ENCODE measurements at regions of chr20 and their contacts with region 1.

Region 1: GRCh38 chr20:53869466-53870258 is 200.7 kb downstream of the BCAS1 start:
- DNase-seq: peak in 8 of 9 donors; percentile 66 to 82 (median 76)
- ATAC-seq: peak; percentile 90
- H3K4me3 ChIP-seq: no peak overlapping the region
- H3K4me3 Mint-ChIP-seq: peak overlapping the region; percentile 11 to 85 (median 58)
- H3K27ac ChIP-seq: peak overlapping the region; percentile 60
- H3K27ac Mint-ChIP-seq: peak overlapping the region; percentile 79 to 97 (median 94)
- H3K4me1 ChIP-seq: peaks cover 64 to 73% of the 10 kb centered on the region in 2 donors
- H3K4me1 Mint-ChIP-seq: peaks cover 55 to 85% (median 73%) of the 10 kb centered on the region in 7 donors
- H3K27me3 ChIP-seq: no peaks in the 10 kb centered on the region
- H3K27me3 Mint-ChIP-seq: no peaks in the 10 kb centered on the region

Region 2: GRCh38 chr20:53330601-53331140 is 539.0 kb before region 1 on chr20:
- CTCF ChIA-PET with region 1: no interaction called
- POLR2A ChIA-PET with region 1: no interaction called
- intact Hi-C with region 1: no loop called
- DNase-seq: no peak
- ATAC-seq: no peak
- H3K4me3 ChIP-seq: no peak overlapping the region
- H3K4me3 Mint-ChIP-seq: no peak overlapping the region
- H3K27ac ChIP-seq: no peak overlapping the region
- H3K27ac Mint-ChIP-seq: peak overlapping the region in 1 of 9 donors; percentile 34
- H3K4me1 ChIP-seq: no peaks in the 10 kb centered on the region
- H3K4me1 Mint-ChIP-seq: peaks cover 0 to 26% (median 5%) of the 10 kb centered on the region in 7 donors
- H3K27me3 ChIP-seq: no peaks in the 10 kb centered on the region
- H3K27me3 Mint-ChIP-seq: no peaks in the 10 kb centered on the region

Region 3: DNA sequence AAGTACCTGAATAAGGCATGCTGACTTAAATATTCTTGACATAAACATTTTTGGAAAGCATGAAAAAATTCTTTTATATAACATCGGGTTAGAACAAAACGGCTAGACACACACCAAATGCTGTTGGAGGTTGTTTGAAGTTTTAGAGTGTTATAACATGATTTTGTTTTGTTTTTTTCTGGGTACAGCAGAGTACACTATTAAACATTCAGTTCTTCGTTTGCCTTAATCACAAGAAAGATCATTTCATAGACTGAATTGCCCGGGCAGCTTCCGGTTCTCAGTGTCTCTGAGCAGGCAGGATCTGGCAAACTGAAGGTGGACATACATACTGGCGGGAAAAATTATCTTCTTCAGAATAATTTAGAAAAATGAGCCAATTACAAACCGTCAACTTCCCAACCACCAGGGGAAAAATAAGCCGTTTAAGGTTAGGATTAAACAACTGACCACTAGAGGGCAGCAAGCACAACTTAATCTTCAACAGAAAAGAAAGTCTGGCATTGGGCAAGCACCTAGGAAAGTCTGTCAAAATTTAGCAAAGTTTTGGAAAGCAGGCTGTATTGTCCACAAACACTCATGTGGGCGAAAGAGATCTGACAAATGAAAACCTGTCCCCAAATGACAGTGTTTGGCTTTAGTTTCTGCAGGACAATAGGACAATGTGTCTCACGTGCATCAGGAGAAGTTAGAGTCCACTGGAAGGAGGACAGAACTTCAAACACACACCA is 291.0 kb before region 1 on chr20:
- CTCF ChIA-PET with region 1: interaction called, 10 read pairs
- POLR2A ChIA-PET with region 1: interaction called, 7 read pairs
- intact Hi-C with region 1: loop called (anchors 1 kb)
- DNase-seq: peak in 8 of 9 donors; percentile 44 to 85 (median 80)
- ATAC-seq: peak; percentile 85
- H3K4me3 ChIP-seq: peak overlapping the region; percentile 49
- H3K4me3 Mint-ChIP-seq: peak overlapping the region; percentile 79 to 98 (median 86)
- H3K27ac ChIP-seq: peak overlapping the region; percentile 70
- H3K27ac Mint-ChIP-seq: peak overlapping the region; percentile 83 to 98 (median 94)
- H3K4me1 ChIP-seq: peaks cover 53 to 60% of the 10 kb centered on the region in 2 donors
- H3K4me1 Mint-ChIP-seq: peaks cover 41 to 99% (median 91%) of the 10 kb centered on the region in 7 donors
- H3K27me3 ChIP-seq: no peaks in the 10 kb centered on the region
- H3K27me3 Mint-ChIP-seq: no peaks in the 10 kb centered on the region

Region 4: DNA sequence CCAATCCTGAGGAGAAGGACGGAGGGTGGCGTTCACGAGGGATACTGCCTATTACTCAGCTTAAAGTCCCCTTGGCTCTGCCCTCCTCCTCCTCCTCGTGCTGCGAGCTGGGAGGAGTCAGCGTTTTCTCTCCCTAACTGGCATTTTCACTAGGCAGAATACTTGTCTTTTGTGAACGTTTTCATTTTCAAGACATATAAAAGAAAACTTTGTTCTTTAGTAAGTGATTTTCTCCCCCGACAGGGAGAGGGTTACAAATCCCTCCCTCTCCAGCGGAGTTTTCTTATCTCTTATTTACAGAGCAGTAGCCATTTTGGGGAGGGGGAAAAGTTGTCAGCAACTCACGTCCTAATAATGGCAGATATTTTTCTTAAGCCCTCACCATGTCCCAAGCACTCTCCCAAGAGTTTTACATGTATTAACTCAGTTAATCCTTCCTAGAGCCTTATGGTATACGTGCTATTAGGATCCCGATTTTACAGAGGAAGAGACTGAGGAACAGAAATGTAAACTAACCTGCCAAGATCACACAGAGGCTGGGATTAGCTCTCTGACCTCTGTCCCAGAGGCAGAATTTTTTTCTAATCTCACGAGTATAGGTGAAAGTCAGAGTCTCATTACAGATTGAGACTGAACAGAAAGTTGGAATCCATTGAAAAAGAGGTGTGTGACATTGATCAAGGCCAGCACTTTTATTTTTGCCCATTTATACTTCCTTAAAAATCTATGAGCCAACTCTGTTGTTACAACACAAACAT is 246.0 kb before region 1 on chr20:
- CTCF ChIA-PET with region 1: no interaction called
- POLR2A ChIA-PET with region 1: interaction called, 8 read pairs
- intact Hi-C with region 1: loop called in 1 of 2 experiments (anchors 1 kb)
- DNase-seq: peak in 4 of 9 donors; percentile 28 to 44 (median 31)
- ATAC-seq: peak; percentile 83
- H3K4me3 ChIP-seq: peak overlapping the region; percentile 56
- H3K4me3 Mint-ChIP-seq: peak overlapping the region; percentile 78 to 92 (median 87)
- H3K27ac ChIP-seq: peak overlapping the region; percentile 74
- H3K27ac Mint-ChIP-seq: peak overlapping the region; percentile 91 to 98 (median 97)
- H3K4me1 ChIP-seq: peaks cover 31 to 32% of the 10 kb centered on the region in 2 donors
- H3K4me1 Mint-ChIP-seq: peaks cover 17 to 53% (median 44%) of the 10 kb centered on the region in 7 donors
- H3K27me3 ChIP-seq: no peaks in the 10 kb centered on the region
- H3K27me3 Mint-ChIP-seq: no peaks in the 10 kb centered on the region

Region 5: DNA sequence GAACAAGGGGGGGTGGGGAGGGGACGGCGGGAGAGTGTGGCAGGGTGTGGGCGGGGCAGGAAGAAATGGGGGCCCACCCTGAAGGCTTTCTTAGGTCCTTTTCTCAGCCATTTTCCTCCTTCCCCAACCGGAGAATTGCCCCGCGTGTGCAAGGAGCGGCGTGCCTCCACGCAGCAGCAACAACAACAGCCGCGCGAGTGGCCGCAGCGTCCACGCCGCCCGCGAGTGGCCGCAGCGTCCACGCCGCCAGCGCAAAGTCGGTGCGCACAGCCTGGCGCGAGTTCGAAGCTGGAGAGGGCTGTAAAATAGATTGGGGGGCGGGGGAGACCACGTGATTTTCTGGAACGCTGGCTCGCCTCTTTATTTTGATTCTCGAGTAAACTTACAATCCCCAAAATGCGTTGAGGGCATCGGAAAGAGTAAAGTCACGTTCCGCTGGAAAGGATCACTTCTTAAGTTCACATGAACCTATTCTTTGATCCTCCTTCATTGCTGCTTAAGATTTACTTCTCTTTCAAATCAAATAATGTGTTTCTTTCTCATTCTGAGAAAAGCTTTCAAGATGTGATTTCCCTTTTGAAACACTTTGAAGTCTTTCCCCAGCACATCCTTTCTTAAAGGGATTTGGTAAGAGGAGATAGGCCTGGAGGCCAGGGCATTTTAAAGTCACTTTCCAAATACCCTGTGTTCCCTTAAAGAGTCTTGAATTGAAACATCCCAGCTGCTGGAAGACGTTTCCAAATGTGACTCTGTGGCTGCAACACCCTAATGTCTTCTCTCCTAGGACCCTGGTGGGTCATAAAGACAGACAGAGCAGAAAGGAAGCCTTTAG is 209.4 kb before region 1 on chr20:
- CTCF ChIA-PET with region 1: interaction called, 3 read pairs
- POLR2A ChIA-PET with region 1: interaction called, 6 read pairs
- intact Hi-C with region 1: loop called in 1 of 2 experiments (anchors 5 kb)
- DNase-seq: peak; percentile 11 to 54 (median 39)
- ATAC-seq: peak; percentile 36
- H3K4me3 ChIP-seq: peak overlapping the region; percentile 71
- H3K4me3 Mint-ChIP-seq: peak overlapping the region; percentile 69 to 92 (median 86)
- H3K27ac ChIP-seq: peak overlapping the region; percentile 74
- H3K27ac Mint-ChIP-seq: peak overlapping the region; percentile 79 to 96 (median 92)
- H3K4me1 ChIP-seq: peaks cover 12 to 32% of the 10 kb centered on the region in 2 donors
- H3K4me1 Mint-ChIP-seq: peaks cover 40 to 79% (median 70%) of the 10 kb centered on the region in 7 donors
- H3K27me3 ChIP-seq: no peaks in the 10 kb centered on the region
- H3K27me3 Mint-ChIP-seq: no peaks in the 10 kb centered on the region

Region 6: GRCh38 chr20:53828682-53829254 is 40.9 kb before region 1 on chr20:
- CTCF ChIA-PET with region 1: no interaction called
- POLR2A ChIA-PET with region 1: interaction called, 8 read pairs
- intact Hi-C with region 1: loop called (anchors 1 to 2 kb)
- DNase-seq: no peak
- ATAC-seq: no peak
- H3K4me3 ChIP-seq: peak overlapping the region; percentile 52
- H3K4me3 Mint-ChIP-seq: peak overlapping the region; percentile 77 to 96 (median 88)
- H3K27ac ChIP-seq: peak overlapping the region; percentile 59
- H3K27ac Mint-ChIP-seq: peak overlapping the region; percentile 86 to 98 (median 94)
- H3K4me1 ChIP-seq: peaks cover 16 to 26% of the 10 kb centered on the region in 2 donors
- H3K4me1 Mint-ChIP-seq: peaks cover 24 to 62% (median 50%) of the 10 kb centered on the region in 7 donors
- H3K27me3 ChIP-seq: no peaks in the 10 kb centered on the region
- H3K27me3 Mint-ChIP-seq: no peaks in the 10 kb centered on the region

Region 7: GRCh38 chr20:53891306-53891944 is 21.8 kb after region 1 on chr20:
- CTCF ChIA-PET with region 1: no interaction called
- POLR2A ChIA-PET with region 1: interaction called, 6 read pairs
- intact Hi-C with region 1: loop called in 1 of 2 experiments (anchors 2 kb)
- DNase-seq: no peak
- ATAC-seq: no peak
- H3K4me3 ChIP-seq: no peak overlapping the region
- H3K4me3 Mint-ChIP-seq: no peak overlapping the region
- H3K27ac ChIP-seq: no peak overlapping the region
- H3K27ac Mint-ChIP-seq: peak overlapping the region in 2 of 9 donors; percentile 12 to 20
- H3K4me1 ChIP-seq: peaks cover 0 to 7% of the 10 kb centered on the region in 2 donors
- H3K4me1 Mint-ChIP-seq: peaks cover 10 to 36% (median 33%) of the 10 kb centered on the region in 7 donors
- H3K27me3 ChIP-seq: no peaks in the 10 kb centered on the region
- H3K27me3 Mint-ChIP-seq: no peaks in the 10 kb centered on the region

Region 8: DNA sequence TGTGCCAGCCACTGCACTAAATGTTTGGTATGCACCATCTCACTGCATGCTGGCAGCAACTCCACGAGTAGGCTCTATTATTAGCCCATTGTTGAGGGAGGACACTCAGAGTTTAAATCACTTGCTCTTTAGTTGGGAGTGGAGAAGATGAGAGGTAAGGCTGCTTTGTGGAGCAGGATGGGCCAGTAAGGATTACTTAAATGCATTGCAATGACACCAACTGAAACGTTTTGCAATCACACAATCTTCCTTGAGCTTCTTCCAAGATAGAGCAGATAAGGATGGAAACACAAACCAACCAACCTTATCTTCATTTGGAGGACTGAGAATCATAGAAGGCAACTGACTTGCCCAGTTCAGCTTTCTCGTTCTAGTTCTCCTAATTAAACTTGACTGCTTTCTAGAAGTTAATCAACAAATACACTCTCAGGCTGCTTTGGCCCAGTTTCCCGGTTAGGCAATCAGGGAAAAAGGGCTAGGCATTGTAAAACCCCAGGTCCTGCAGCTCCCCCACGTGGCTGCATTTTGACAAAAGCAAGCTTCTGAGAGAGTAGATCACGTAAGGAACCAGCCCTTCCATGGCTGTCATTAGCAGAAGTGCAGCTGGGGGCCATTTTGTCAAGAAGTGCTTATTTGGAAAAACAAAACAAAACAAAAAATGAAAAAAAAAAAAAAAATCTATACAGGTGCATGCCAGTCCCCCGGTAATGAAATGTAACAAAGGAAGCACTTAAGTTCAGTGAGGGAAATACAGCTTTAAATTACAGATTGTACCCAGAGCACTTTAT is 70.1 kb after region 1 on chr20:
- CTCF ChIA-PET with region 1: interaction called, 7 read pairs
- POLR2A ChIA-PET with region 1: interaction called, 4 read pairs
- intact Hi-C with region 1: loop called (anchors 2 to 5 kb)
- DNase-seq: peak; percentile 35 to 62 (median 48)
- ATAC-seq: peak; percentile 82
- H3K4me3 ChIP-seq: no peak overlapping the region
- H3K4me3 Mint-ChIP-seq: peak overlapping the region in 3 of 10 donors; percentile 24 to 44 (median 30)
- H3K27ac ChIP-seq: no peak overlapping the region
- H3K27ac Mint-ChIP-seq: peak overlapping the region in 6 of 9 donors; percentile 2 to 79 (median 22)
- H3K4me1 ChIP-seq: peaks cover 15 to 24% of the 10 kb centered on the region in 2 donors
- H3K4me1 Mint-ChIP-seq: peaks cover 26 to 62% (median 44%) of the 10 kb centered on the region in 7 donors
- H3K27me3 ChIP-seq: no peaks in the 10 kb centered on the region
- H3K27me3 Mint-ChIP-seq: no peaks in the 10 kb centered on the region

Region 9: DNA sequence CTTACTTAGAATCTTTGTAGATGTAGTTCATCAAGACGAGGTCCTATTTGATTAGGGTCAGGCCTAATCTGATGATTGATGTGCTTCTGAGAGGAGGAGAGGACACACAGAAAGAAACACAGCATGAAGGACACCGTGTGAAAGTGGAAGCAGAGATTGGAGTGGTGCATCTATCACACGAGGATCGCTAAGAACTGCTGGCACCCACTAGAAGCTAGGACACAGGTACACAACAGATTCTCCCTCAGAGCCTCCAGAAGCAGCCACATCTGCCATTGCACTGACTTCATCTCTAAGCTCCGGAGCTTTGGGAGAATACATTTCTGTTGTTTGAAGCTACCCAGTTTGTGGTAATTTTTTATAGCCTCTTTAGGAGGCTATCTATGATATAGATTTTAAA is 442.9 kb after region 1 on chr20:
- CTCF ChIA-PET with region 1: no interaction called
- POLR2A ChIA-PET with region 1: no interaction called
- intact Hi-C with region 1: no loop called
- DNase-seq: no peak
- ATAC-seq: no peak
- H3K4me3 ChIP-seq: no peak overlapping the region
- H3K4me3 Mint-ChIP-seq: no peak overlapping the region
- H3K27ac ChIP-seq: no peak overlapping the region
- H3K27ac Mint-ChIP-seq: no peak overlapping the region
- H3K4me1 ChIP-seq: no peaks in the 10 kb centered on the region
- H3K4me1 Mint-ChIP-seq: peaks cover 0 to 9% (median 0%) of the 10 kb centered on the region in 7 donors
- H3K27me3 ChIP-seq: no peaks in the 10 kb centered on the region
- H3K27me3 Mint-ChIP-seq: peaks cover 0 to 50% (median 42%) of the 10 kb centered on the region in 5 donors

Measured in naive thymus-derived CD4-positive, alpha-beta T cell (primary cell).